Caco-2 (cell line): ENCODE measurements at regions of chr20 and their contacts with region 1.

Region 1: DNA sequence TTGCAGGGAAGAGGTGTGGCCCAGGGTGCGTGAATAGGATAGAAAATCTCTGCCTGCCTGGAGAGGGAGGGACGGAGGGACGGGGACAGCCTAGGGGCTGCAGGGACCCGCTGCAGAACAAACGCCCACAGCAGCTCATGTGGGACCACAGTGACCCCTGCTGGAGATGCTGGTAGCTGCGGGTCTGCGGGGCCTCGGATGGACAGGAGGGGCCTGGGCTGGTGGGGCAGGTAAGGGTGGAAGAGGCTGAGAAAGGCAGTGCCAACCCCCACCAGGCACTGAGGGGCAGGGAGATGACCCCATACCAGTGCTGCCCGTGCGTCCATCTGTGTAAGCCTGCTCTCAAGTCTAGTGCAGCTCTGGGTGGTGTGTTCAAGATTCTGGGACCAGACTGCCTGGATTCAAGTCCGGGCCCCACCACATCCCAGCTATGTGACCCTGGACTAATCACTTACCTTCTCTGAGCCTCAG is 39.4 kb downstream of the KIAA1755 start:
- DNase-seq: peak; percentile 92 to 98
- H3K4me3 ChIP-seq: no peak overlapping the region
- H3K4me3 Mint-ChIP-seq: no peak overlapping the region
- H3K27ac Mint-ChIP-seq: no peak overlapping the region
- H3K4me1 ChIP-seq: peaks cover 13% of the 10 kb centered on the region
- H3K4me1 Mint-ChIP-seq: no peaks in the 10 kb centered on the region
- H3K27me3 ChIP-seq: no peaks in the 10 kb centered on the region
- H3K27me3 Mint-ChIP-seq: peaks cover 2% of the 10 kb centered on the region
- CTCF ChIP-seq: peak; percentile 100

Region 2: DNA sequence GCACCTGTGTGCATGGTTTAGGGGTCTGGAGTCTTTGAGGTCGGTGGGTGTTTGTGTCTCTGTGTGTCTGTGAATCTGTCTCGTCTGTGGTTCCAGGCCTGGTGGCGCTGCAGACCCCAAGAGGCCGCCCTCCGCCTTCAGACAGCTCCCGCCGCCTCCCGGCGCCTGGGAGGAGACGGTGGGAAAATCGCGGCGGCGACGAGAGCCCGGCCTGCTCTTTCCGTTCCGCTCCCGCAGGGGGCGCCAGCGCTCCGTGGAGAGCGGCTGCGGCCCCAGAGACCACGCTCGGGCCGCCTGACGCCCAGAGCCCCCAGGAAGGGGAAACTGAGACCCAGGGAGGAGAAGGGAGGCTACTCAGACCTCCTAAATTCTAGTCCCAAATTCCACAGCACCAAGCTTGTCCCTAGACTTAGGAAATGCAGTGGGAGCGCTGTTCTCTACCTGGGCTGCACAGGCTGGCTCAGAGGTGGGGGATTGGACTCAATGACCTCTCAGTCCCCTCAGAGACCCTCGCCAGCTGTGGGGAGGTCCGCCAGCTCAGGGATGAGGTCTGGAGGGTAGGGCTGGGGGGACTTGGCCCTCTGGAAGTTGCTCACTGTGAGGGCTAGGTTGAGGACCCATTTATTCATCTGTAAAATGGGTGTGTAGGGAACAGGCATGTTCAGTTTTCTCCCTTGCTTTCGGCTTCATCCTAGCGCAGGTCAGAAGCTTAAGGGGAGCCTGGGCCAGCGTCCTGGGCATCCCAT is 656.6 kb before region 1 on chr20:
- CTCF ChIA-PET with region 1: interaction called, 10 read pairs
- POLR2A ChIA-PET with region 1: no interaction called
- intact Hi-C with region 1: loop called (anchors 5 kb)
- DNase-seq: peak; percentile 62 to 87
- H3K4me3 ChIP-seq: no peak overlapping the region
- H3K4me3 Mint-ChIP-seq: no peak overlapping the region
- H3K27ac Mint-ChIP-seq: peak overlapping the region; percentile 7
- H3K4me1 ChIP-seq: peaks cover 30% of the 10 kb centered on the region
- H3K4me1 Mint-ChIP-seq: peaks cover 16% of the 10 kb centered on the region
- H3K27me3 ChIP-seq: peaks cover 1% of the 10 kb centered on the region; the same call in 1 of the 2 replicates
- H3K27me3 Mint-ChIP-seq: peaks cover 12% of the 10 kb centered on the region
- CTCF ChIP-seq: peak; percentile 99 to 100

Region 3: DNA sequence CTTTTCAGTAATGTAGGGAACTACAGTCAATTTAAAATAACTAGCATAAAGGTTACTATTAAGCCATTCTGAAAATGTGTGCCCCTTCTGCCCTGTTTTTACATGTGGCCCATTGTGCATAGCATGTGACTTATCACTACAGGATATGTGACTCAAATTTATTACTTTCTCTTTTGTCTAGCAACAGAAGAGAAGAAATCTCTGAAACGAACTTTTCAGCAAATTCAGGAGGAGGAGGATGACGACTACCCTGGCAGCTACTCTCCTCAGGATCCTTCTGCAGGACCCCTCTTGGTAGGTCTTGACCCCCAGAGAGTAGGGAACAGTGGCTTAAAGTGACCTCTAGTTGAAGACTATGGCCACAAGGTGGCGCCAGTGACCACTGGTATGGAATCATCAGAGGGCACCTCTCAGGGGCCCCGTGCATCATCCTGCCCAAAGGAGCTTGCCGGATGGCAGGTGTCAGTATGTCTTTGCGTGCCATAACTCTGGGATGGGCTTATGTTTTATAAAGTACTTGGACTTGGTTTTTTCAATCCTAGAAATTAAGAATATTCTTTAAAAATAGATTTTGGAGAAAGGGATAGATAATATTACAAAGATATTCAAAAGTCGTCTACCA is 163.7 kb before region 1 on chr20:
- CTCF ChIA-PET with region 1: interaction called, 102 read pairs
- POLR2A ChIA-PET with region 1: no interaction called
- intact Hi-C with region 1: loop called (anchors 1 kb)
- DNase-seq: peak; percentile 90 to 94
- H3K4me3 ChIP-seq: no peak overlapping the region
- H3K4me3 Mint-ChIP-seq: no peak overlapping the region
- H3K27ac Mint-ChIP-seq: no peak overlapping the region
- H3K4me1 ChIP-seq: peaks cover 21% of the 10 kb centered on the region
- H3K4me1 Mint-ChIP-seq: peaks cover 13% of the 10 kb centered on the region
- H3K27me3 ChIP-seq: no peaks in the 10 kb centered on the region
- H3K27me3 Mint-ChIP-seq: no peaks in the 10 kb centered on the region
- CTCF ChIP-seq: peak; percentile 98 to 100

Region 4: DNA sequence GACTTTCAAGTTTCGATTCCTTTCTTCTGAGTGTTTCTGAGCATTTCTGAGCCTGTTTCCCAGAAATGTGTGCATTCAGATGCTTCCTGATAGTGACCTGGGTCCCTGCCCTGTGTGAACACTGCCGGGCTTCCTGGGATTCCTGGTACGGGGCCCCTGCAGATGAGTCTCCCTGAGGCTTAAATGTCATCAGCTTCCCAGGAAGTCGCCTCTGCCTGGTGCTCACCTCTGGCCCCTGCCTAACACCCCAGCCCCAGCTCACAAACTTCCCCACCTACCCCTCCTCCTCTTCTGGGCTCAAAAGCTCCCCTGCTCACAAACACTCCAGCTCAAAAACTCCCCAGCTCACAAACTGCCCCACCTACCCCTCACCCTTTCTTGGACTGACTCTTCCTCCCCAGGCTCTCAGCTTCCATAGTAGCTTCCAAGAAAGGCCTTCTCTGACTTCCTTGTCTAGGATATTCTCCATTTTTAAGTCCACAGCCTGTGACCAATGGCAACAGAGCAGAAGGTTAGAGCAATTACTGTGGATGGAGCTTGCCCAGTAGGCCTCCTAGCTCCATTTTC is 98.0 kb before region 1 on chr20:
- CTCF ChIA-PET with region 1: interaction called, 16 read pairs
- POLR2A ChIA-PET with region 1: no interaction called
- intact Hi-C with region 1: no loop called
- DNase-seq: peak; percentile 96 to 98
- H3K4me3 ChIP-seq: no peak overlapping the region
- H3K4me3 Mint-ChIP-seq: peak overlapping the region; percentile 50
- H3K27ac Mint-ChIP-seq: peak overlapping the region; percentile 99
- H3K4me1 ChIP-seq: peaks cover 34% of the 10 kb centered on the region
- H3K4me1 Mint-ChIP-seq: peaks cover 42% of the 10 kb centered on the region
- H3K27me3 ChIP-seq: no peaks in the 10 kb centered on the region
- H3K27me3 Mint-ChIP-seq: no peaks in the 10 kb centered on the region
- CTCF ChIP-seq: no peak

Region 5: GRCh38 chr20:38187512-38187911 is 33.6 kb before region 1 on chr20:
- CTCF ChIA-PET with region 1: interaction called, 8 read pairs
- POLR2A ChIA-PET with region 1: no interaction called
- intact Hi-C with region 1: loop called (anchors 2 kb)
- DNase-seq: peak; percentile 49 to 51
- H3K4me3 ChIP-seq: no peak overlapping the region
- H3K4me3 Mint-ChIP-seq: no peak overlapping the region
- H3K27ac Mint-ChIP-seq: no peak overlapping the region
- H3K4me1 ChIP-seq: peaks cover 14% of the 10 kb centered on the region
- H3K4me1 Mint-ChIP-seq: peaks cover 17% of the 10 kb centered on the region
- H3K27me3 ChIP-seq: no peaks in the 10 kb centered on the region
- H3K27me3 Mint-ChIP-seq: no peaks in the 10 kb centered on the region
- CTCF ChIP-seq: peak; percentile 33 to 50

Region 6: DNA sequence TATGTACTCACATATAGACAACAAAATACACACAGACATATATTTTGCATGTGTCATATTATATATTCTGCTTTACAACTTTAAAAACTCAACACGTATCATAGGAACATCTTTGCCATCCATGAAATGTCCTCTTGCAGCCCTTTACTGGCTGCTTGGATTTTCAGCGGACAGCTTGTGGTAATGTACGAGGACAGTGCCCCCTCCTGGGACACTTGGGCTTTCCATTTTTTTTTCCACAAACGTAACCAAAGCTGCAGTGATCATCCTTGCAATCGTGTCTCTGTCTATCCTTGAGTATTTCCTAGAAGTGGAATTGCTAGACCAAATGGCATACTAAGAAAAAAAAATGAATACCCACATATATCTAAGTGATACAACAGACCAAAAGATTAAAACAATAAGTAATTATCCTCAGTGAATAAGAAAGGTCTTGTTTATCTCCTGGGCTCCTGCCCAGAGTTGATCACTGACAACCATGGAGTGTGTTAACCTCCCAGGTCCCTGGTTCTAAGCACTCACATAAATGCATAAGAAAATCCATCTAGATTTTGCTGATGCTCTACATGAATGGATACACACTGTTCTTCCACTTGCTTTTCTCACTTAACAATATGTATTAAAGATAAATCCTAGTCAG is 100.9 kb after region 1 on chr20:
- CTCF ChIA-PET with region 1: no interaction called
- POLR2A ChIA-PET with region 1: no interaction called
- intact Hi-C with region 1: loop called (anchors 2 kb)
- DNase-seq: peak in 1 of 2 experiments; percentile 76
- H3K4me3 ChIP-seq: no peak overlapping the region
- H3K4me3 Mint-ChIP-seq: no peak overlapping the region
- H3K27ac Mint-ChIP-seq: no peak overlapping the region
- H3K4me1 ChIP-seq: no peaks in the 10 kb centered on the region
- H3K4me1 Mint-ChIP-seq: peaks cover 5% of the 10 kb centered on the region
- H3K27me3 ChIP-seq: no peaks in the 10 kb centered on the region
- H3K27me3 Mint-ChIP-seq: peaks cover 25% of the 10 kb centered on the region
- CTCF ChIP-seq: peak; percentile 93 to 97

Region 7: DNA sequence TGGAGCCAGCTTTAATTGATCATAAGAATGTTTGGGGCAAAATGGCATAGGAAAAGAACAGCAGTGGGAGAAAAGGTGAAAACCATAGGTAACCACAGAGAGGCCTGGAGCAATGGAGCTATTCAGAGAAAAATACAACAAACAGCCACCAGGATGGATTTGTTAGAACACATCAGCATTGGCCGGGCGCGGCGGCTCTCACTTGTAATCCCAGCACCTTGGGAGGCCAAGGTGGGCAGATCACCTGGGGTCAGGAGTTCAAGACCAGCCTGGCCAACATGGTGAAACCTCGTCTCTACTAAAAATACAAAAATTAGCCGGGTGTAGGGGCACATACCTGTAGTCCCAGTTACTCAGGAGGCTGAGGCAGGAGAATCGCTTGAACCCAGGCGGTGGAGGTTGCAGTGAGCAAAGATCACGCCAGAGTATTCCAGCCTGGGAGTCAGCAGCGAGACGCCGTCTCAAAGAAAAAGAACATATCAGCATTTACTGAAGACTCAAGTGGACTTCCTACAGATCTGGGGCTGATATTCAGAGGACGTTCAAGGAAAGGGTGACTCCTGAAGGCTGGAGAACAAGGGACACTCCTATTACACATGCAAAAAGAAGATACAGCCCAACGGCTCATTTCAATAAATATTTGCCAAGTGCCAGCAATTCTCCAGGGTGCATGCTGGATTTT is 193.8 kb after region 1 on chr20:
- CTCF ChIA-PET with region 1: no interaction called
- POLR2A ChIA-PET with region 1: no interaction called
- intact Hi-C with region 1: no loop called
- DNase-seq: peak in 1 of 2 experiments; percentile 32
- H3K4me3 ChIP-seq: no peak overlapping the region
- H3K4me3 Mint-ChIP-seq: no peak overlapping the region
- H3K27ac Mint-ChIP-seq: no peak overlapping the region
- H3K4me1 ChIP-seq: no peaks in the 10 kb centered on the region
- H3K4me1 Mint-ChIP-seq: no peaks in the 10 kb centered on the region
- H3K27me3 ChIP-seq: no peaks in the 10 kb centered on the region
- H3K27me3 Mint-ChIP-seq: no peaks in the 10 kb centered on the region
- CTCF ChIP-seq: no peak